CD4-positive, alpha-beta T cell (primary cell): ENCODE measurements at regions of chr14 and their contacts with region 1.

Region 1: GRCh38 chr14:75293920-75294642 is 15.5 kb downstream of the FOS start:
- DNase-seq: peak; percentile 88 to 98 (median 94)
- ATAC-seq: peak; percentile 84
- H3K4me3 ChIP-seq: peak overlapping the region; percentile 65
- H3K4me3 Mint-ChIP-seq: peak overlapping the region; percentile 94
- H3K27ac ChIP-seq: peak overlapping the region; percentile 80 to 95
- H3K27ac Mint-ChIP-seq: peak overlapping the region; percentile 85
- H3K4me1 ChIP-seq: peaks cover 32% of the 10 kb centered on the region
- H3K4me1 Mint-ChIP-seq: peaks cover 21% of the 10 kb centered on the region
- H3K27me3 ChIP-seq: no peaks in the 10 kb centered on the region
- H3K27me3 Mint-ChIP-seq: peaks cover 4% of the 10 kb centered on the region
- CTCF ChIP-seq: no peak

Region 2: GRCh38 chr14:75126679-75127473 is 167.2 kb before region 1 on chr14 and contains the start of gene NEK9:
- CTCF ChIA-PET with region 1: interaction called, 7 read pairs
- POLR2A ChIA-PET with region 1: interaction called, 18 read pairs
- intact Hi-C with region 1: no loop called
- DNase-seq: peak; percentile 82 to 93 (median 87)
- ATAC-seq: peak; percentile 82
- H3K4me3 ChIP-seq: peak within 1 kb of the TSS; percentile 92
- H3K4me3 Mint-ChIP-seq: peak within 1 kb of the TSS; percentile 99
- H3K27ac ChIP-seq: peak within 1 kb of the TSS; percentile 89 to 93
- H3K27ac Mint-ChIP-seq: peak within 1 kb of the TSS; percentile 90
- H3K4me1 ChIP-seq: peaks cover 36% of the 10 kb centered on the region
- H3K4me1 Mint-ChIP-seq: peaks cover 44% of the 10 kb centered on the region
- H3K27me3 ChIP-seq: no peaks in the 10 kb centered on the region
- H3K27me3 Mint-ChIP-seq: no peaks in the 10 kb centered on the region
- CTCF ChIP-seq: no peak
- total RNA-seq, gene NEK9: 53.5 to 54.1 TPM

Region 3: GRCh38 chr14:75176142-75176820 is 117.8 kb before region 1 on chr14 and contains the start of gene TMED10:
- CTCF ChIA-PET with region 1: interaction called, 5 read pairs
- POLR2A ChIA-PET with region 1: interaction called, 12 read pairs
- intact Hi-C with region 1: loop called (anchors 1 kb)
- DNase-seq: peak; percentile 84 to 95 (median 89)
- ATAC-seq: peak; percentile 75
- H3K4me3 ChIP-seq: peak within 1 kb of the TSS; percentile 79
- H3K4me3 Mint-ChIP-seq: peak within 1 kb of the TSS; percentile 94
- H3K27ac ChIP-seq: peak within 1 kb of the TSS; percentile 99 to 100
- H3K27ac Mint-ChIP-seq: peak within 1 kb of the TSS; percentile 97
- H3K4me1 ChIP-seq: peaks cover 30% of the 10 kb centered on the region
- H3K4me1 Mint-ChIP-seq: peaks cover 53% of the 10 kb centered on the region
- H3K27me3 ChIP-seq: no peaks in the 10 kb centered on the region
- H3K27me3 Mint-ChIP-seq: no peaks in the 10 kb centered on the region
- CTCF ChIP-seq: no peak
- total RNA-seq, gene TMED10: 153 to 156 TPM

Region 4: GRCh38 chr14:75238756-75239455 is 55.2 kb before region 1 on chr14:
- CTCF ChIA-PET with region 1: interaction called, 10 read pairs
- POLR2A ChIA-PET with region 1: no interaction called
- intact Hi-C with region 1: no loop called
- DNase-seq: no peak
- ATAC-seq: no peak
- H3K4me3 ChIP-seq: no peak overlapping the region
- H3K4me3 Mint-ChIP-seq: no peak overlapping the region
- H3K27ac ChIP-seq: no peak overlapping the region
- H3K27ac Mint-ChIP-seq: no peak overlapping the region
- H3K4me1 ChIP-seq: peaks cover 5% of the 10 kb centered on the region
- H3K4me1 Mint-ChIP-seq: peaks cover 16% of the 10 kb centered on the region
- H3K27me3 ChIP-seq: peaks cover 0 to 2% of the 10 kb centered on the region in 2 experiments
- H3K27me3 Mint-ChIP-seq: no peaks in the 10 kb centered on the region
- CTCF ChIP-seq: no peak

Region 5: GRCh38 chr14:75258615-75259466 is 35.2 kb before region 1 on chr14:
- CTCF ChIA-PET with region 1: interaction called, 6 read pairs
- POLR2A ChIA-PET with region 1: interaction called, 22 read pairs
- intact Hi-C with region 1: loop called in 1 of 2 experiments (anchors 1 kb)
- DNase-seq: peak; percentile 99 to 100 (median 100)
- ATAC-seq: peak; percentile 86
- H3K4me3 ChIP-seq: peak overlapping the region; percentile 50
- H3K4me3 Mint-ChIP-seq: peak overlapping the region; percentile 81
- H3K27ac ChIP-seq: peak overlapping the region; percentile 93 to 96
- H3K27ac Mint-ChIP-seq: peak overlapping the region; percentile 98
- H3K4me1 ChIP-seq: peaks cover 38% of the 10 kb centered on the region
- H3K4me1 Mint-ChIP-seq: peaks cover 45% of the 10 kb centered on the region
- H3K27me3 ChIP-seq: no peaks in the 10 kb centered on the region
- H3K27me3 Mint-ChIP-seq: no peaks in the 10 kb centered on the region
- CTCF ChIP-seq: no peak

Region 6: DNA sequence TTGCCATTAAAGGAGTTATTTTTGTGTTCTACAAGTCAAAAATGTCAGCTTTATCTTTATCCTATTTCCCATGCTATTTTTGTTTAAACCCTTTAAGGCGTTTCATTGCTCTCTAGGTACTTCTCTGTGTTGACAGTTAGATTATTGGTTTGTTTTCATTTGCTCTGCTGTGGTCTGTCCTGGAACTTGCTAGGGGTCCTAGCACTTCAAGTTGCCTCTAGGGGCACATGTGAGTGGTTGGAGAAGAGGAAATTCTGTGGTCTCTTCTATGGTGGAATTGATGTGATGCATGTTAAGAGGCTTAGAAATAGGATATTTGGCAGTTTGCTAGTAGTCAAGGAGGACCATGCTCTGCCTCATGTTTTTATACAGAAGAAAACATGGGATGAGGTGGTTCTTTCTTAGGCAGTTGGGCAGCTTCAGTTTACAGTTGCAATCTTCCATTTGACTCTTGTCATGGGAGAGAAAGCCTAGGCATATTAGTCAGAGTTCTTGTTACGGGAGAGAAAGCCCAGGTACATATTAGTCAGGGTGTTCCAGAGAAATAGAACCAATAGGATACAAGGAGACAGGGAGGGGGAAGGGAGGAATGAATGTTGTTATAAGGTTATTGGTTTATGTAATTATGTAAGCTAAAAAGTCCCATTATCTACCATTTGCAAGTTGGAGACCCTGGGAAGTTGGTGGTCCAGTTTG is 381.3 kb after region 1 on chr14:
- CTCF ChIA-PET with region 1: no interaction called
- POLR2A ChIA-PET with region 1: no interaction called
- intact Hi-C with region 1: no loop called
- DNase-seq: no peak
- ATAC-seq: no peak
- H3K4me3 ChIP-seq: no peak overlapping the region
- H3K4me3 Mint-ChIP-seq: no peak overlapping the region
- H3K27ac ChIP-seq: no peak overlapping the region
- H3K27ac Mint-ChIP-seq: no peak overlapping the region
- H3K4me1 ChIP-seq: no peaks in the 10 kb centered on the region
- H3K4me1 Mint-ChIP-seq: no peaks in the 10 kb centered on the region
- H3K27me3 ChIP-seq: no peaks in the 10 kb centered on the region
- H3K27me3 Mint-ChIP-seq: no peaks in the 10 kb centered on the region
- CTCF ChIP-seq: no peak